Heart left ventricle (tissue), 16 donors: ENCODE measurements at regions of chr7 and their contacts with region 1.

Region 1: DNA sequence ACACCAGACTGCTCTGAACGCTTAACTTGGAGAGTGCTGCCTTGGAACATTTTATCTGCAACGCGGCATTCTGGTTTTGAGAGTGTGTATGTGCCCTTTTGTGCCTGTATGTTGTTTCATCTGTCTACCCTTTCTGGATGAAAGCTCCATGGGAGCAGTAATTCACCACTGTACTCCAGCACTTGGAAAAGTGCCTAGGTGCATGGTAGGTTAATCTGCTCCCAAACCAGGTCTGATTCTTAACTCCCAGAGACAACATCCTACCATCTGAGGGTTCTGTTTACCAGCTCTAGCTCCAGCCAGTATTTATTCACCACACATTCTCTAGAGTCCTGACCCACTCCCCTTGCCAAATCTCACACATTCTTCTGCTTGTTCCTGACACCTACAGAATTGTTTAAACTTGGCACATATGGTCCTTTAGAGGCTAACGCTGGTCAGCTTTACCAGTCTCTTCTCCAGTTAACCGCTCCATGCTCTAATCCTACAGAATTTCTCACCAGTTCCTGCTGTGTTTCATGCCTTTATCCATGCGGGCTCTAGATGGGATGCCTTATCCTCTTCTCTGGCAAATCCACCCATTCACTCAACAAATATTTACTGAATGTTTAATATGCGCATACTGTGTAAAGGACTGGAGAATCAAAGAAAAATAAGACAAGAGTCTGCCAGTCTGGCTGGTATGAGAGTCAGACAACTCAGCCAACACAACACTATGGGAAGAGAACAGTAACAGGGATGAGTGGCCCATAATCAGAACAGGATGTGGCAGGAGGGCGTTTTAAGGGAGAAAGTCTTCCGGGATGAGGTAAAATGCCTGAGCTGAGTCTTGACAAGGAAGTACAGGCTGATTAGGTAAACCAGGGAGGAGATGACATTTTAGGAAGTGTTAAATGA is 46.3 kb downstream of the MTPN start:
- DNase-seq: no peak
- ATAC-seq: peak; percentile 85 to 94 (median 88)
- H3K4me3 ChIP-seq: no peak overlapping the region
- H3K27ac ChIP-seq: peak overlapping the region; percentile 27 to 81 (median 62)
- H3K4me1 ChIP-seq: peaks cover 0 to 74% (median 33%) of the 10 kb centered on the region in 12 donors
- H3K27me3 ChIP-seq: no peaks in the 10 kb centered on the region
- CTCF ChIP-seq: no peak
- POLR2A ChIP-seq: no peak

Region 2: DNA sequence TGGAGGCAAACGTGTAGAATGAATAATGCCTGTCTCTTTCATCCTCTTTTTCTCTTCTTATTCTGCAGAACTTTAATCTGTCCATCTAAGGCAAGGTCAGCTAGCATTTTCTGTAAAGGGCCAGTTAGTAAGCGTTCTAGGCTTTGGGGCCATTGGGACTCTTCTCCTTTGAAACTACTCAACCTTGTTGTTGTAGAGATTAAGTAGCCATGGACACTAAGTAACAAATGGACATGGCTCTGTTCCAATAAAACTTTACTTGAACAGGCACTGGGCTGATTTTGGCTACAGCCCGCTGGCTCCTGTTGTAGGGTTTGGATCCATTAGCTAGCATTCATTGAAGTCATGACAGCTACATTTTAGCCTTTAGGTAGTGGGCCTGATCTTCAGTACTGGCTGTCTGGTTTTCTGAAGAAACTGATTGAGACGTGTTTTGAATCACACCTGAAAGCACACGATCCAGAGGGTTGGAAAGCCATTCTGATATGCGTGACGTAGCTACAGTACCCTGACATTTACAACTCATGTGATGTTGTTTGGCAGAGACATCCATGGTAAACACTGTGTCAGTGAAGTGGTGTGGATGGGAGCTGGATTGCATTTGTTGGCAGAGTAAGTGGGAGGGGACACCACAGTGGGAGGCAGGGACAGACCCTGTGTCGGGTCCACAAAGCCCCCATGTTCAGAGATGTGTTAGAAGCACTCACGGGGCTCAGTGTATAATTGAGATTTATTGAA is 46.1 kb before region 1 on chr7:
- intact Hi-C with region 1: loop called in 1 of 10 experiments (anchors 2 kb)
- DNase-seq: peak in 1 of 5 donors; percentile 30
- ATAC-seq: peak; percentile 78 to 94 (median 87)
- H3K4me3 ChIP-seq: no peak overlapping the region
- H3K27ac ChIP-seq: peak overlapping the region in 2 of 12 donors; percentile 43 to 53
- H3K4me1 ChIP-seq: peaks cover 0 to 13% (median 0%) of the 10 kb centered on the region in 12 donors
- H3K27me3 ChIP-seq: no peaks in the 10 kb centered on the region
- CTCF ChIP-seq: no peak
- POLR2A ChIP-seq: no peak

Region 3: GRCh38 chr7:135965602-135966001 is 34.8 kb after region 1 on chr7:
- intact Hi-C with region 1: loop called in 1 of 10 experiments (anchors 5 kb)
- DNase-seq: no peak
- ATAC-seq: peak in 1 of 4 donors; percentile 20
- H3K4me3 ChIP-seq: no peak overlapping the region
- H3K27ac ChIP-seq: no peak overlapping the region
- H3K4me1 ChIP-seq: peaks cover 0 to 86% (median 29%) of the 10 kb centered on the region in 12 donors
- H3K27me3 ChIP-seq: no peaks in the 10 kb centered on the region
- CTCF ChIP-seq: no peak
- POLR2A ChIP-seq: no peak

Region 4: DNA sequence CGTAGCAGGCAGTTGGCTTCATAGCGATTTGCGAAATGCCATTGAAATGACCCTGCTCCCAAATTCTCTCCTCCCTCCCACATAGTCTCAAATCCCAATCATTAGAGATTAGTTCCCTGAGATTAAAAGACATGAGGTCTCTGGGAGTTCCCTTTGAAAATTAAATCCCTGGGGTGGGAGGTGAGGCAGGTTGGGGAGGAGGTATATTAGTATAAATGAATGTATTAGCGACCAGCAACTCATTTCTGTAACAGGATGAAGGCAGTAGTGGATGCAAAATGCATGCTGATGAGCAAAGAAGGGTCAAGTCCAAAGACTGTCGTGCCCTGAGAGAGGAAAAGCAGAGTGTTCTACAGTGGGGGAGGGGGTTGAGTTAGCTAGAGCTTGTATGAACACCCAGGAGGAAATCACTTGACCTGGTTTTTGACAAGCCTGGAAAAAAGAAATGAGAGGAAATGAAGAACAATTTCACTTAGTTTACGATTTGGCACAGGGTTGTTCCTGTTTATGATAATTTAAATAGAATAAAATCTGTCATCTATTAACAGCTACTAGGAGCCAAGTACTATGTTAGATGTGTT is 125.9 kb after region 1 on chr7:
- intact Hi-C with region 1: no loop called
- DNase-seq: no peak
- ATAC-seq: peak in 1 of 4 donors; percentile 52
- H3K4me3 ChIP-seq: no peak overlapping the region
- H3K27ac ChIP-seq: no peak overlapping the region
- H3K4me1 ChIP-seq: no peaks in the 10 kb centered on the region
- H3K27me3 ChIP-seq: no peaks in the 10 kb centered on the region
- CTCF ChIP-seq: no peak
- POLR2A ChIP-seq: no peak